CD8-positive, alpha-beta T cell (primary cell): ENCODE measurements at regions of chr19 and their contacts with region 1.

Region 1: DNA sequence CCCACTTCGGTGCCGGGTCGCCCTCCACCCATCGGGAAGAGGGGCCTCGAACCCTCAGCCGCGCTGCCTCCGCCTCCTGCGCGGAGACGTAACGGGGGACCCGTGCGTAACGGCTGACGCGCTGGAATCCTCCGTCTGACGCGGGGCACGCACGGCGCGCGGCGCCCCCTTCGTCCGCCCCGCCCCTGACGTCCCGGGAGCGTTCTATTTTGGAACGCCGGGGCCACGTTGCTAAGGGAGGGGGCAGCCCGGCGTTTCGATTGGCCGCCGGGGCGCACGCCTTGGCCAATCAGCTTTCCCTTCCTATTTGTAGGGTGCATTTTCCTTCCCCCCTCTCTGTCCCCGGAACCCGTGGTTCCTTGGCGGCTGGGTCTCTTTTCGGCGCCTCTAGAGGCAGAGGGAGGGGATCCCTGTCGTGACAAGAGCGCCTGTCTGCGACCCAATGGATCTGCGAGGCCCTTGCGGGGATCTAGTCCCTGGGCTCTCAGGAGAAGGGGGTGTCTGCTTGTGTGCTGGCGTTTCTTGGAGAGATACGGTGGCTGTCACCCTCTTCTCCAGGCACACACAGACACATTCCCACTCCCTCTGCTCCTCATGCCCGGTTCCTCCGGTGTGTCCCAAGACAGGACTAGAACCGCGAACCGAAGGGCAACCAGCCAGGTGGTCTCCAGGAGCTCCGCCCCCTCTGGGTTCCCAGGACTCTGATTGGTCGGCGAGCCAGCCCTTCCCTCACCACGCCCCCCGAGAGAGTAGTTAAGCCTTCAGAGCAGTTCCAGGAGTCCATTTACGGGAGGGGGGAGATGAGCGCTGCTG is 1.5 kb downstream of the FOSB start:
- DNase-seq: peak; percentile 81 to 97 (median 93)
- ATAC-seq: peak; percentile 63
- H3K4me3 ChIP-seq: peak overlapping the region; percentile 85 to 98
- H3K4me3 Mint-ChIP-seq: peak overlapping the region; percentile 93
- H3K27ac ChIP-seq: peak overlapping the region; percentile 99 to 100
- H3K27ac Mint-ChIP-seq: peak overlapping the region; percentile 98
- H3K4me1 ChIP-seq: peaks cover 16% of the 10 kb centered on the region
- H3K4me1 Mint-ChIP-seq: peaks cover 17% of the 10 kb centered on the region
- H3K27me3 ChIP-seq: no peaks in the 10 kb centered on the region
- H3K27me3 Mint-ChIP-seq: peaks cover 15% of the 10 kb centered on the region
- CTCF ChIP-seq: no peak

Region 2: DNA sequence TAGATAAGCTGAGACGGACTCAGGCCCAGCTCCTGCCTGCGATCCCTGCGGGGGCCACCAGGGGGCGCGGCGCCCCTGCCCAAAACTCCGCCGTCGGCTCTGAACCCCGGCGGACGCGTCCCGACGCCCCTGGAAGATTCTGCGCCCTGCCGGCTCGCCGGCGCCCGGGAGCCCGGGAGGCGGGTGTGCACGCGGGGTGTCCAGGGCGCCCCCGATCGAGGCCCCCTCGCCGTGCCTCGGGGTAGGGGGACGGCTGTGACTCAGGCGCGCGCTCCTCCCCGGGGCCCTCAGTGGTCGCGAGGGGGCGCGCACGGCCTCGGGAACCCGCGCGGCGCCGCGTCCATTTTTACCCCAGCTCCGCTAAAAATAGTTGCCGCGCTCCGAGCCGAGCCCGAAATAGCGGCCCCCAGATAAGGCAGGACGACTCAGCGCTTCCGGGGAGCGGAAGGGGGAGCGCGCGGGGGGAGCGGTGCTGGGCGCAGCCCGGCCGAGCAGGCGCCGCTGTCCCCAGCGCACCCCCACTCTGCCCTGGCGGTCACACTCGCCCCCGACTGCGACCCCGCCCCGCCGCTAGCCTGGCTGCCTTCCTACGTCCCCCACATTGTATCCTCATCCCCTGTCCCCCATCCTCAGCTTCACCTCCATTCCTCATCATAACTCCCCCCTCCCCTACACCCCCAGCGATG is 29.6 kb before region 1 on chr19:
- CTCF ChIA-PET with region 1: interaction called, 53 read pairs
- POLR2A ChIA-PET with region 1: interaction called, 39 read pairs
- intact Hi-C with region 1: loop called (anchors 1 kb)
- DNase-seq: peak; percentile 76 to 94 (median 86)
- ATAC-seq: peak; percentile 70
- H3K4me3 ChIP-seq: peak overlapping the region; percentile 23 to 71
- H3K4me3 Mint-ChIP-seq: peak overlapping the region; percentile 74
- H3K27ac ChIP-seq: peak overlapping the region; percentile 65 to 81
- H3K27ac Mint-ChIP-seq: no peak overlapping the region
- H3K4me1 ChIP-seq: peaks cover 37% of the 10 kb centered on the region
- H3K4me1 Mint-ChIP-seq: peaks cover 30% of the 10 kb centered on the region
- H3K27me3 ChIP-seq: no peaks in the 10 kb centered on the region
- H3K27me3 Mint-ChIP-seq: no peaks in the 10 kb centered on the region
- CTCF ChIP-seq: peak; percentile 100

Region 3: DNA sequence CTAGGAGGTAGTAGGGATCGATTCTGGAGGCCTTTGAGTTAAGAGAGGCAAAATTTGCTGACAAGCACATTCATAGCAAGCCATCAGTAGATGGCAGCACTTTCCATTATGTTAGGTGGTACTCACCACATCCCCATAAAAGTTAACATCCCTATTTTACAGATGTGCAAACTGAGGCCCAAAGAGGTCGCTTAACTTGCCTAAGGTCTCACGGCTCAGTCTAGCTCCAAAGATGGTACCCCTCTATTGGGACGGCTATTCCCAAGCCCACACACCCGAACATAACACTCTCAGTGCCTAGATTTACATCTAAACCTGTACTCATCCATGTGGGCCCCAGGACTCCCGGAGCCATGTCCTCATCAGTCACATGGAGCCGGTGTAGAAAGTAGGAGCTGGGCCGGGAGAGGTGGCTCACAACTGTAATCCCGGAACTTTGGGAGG is 23.0 kb before region 1 on chr19:
- CTCF ChIA-PET with region 1: interaction called, 53 read pairs
- POLR2A ChIA-PET with region 1: interaction called, 17 read pairs
- intact Hi-C with region 1: loop called (anchors 1 kb)
- DNase-seq: peak in 3 of 9 experiments; percentile 22 to 76 (median 65)
- ATAC-seq: no peak
- H3K4me3 ChIP-seq: no peak overlapping the region
- H3K4me3 Mint-ChIP-seq: peak overlapping the region; percentile 35
- H3K27ac ChIP-seq: peak overlapping the region in 1 of 2 experiments; percentile 41
- H3K27ac Mint-ChIP-seq: no peak overlapping the region
- H3K4me1 ChIP-seq: peaks cover 45% of the 10 kb centered on the region
- H3K4me1 Mint-ChIP-seq: peaks cover 56% of the 10 kb centered on the region
- H3K27me3 ChIP-seq: no peaks in the 10 kb centered on the region
- H3K27me3 Mint-ChIP-seq: no peaks in the 10 kb centered on the region
- CTCF ChIP-seq: peak; percentile 20

Region 4: DNA sequence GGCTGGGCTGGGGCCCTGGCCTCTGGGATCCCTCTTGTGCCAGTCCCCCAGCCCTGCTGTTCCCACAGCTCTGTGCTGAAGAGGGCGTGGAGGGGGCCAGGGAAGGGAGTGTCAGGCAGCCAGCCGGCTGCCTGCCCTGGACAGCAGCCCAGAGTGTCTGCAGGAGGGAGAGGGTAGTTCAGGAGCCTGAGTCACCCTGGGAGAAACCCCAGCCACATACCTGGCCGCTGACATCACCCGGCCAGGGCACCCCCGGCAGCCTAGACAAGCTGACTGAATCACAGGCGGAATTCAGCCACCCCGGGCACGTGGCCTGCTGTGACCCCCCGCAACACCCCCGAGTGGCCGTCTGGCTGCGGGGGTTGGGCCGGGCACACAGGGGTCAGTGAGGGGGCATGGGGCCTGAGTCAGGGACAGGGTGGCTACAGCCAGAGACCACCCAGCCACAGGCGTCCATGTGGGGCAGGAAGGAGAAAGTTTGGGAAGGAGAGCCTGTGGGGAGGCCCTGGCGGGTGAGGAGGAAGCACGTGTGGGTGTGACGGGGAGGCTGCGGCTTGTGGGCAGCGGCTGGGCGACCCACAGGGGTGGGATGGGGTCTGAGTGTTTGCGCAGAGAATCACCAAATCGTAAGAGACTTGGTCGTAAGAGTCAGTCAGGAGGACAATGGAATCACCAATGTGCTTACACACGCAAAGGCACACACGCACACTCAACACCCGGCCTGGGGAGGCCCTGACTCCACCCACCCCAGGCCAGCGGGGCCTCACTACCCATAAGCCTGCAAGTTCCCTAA is 13.4 kb before region 1 on chr19:
- CTCF ChIA-PET with region 1: interaction called, 6 read pairs
- POLR2A ChIA-PET with region 1: interaction called, 8 read pairs
- intact Hi-C with region 1: loop called in 1 of 2 experiments (anchors 1 kb)
- DNase-seq: peak; percentile 17 to 90 (median 69)
- ATAC-seq: peak; percentile 50
- H3K4me3 ChIP-seq: peak overlapping the region in 1 of 2 experiments; percentile 2
- H3K4me3 Mint-ChIP-seq: peak overlapping the region; percentile 35
- H3K27ac ChIP-seq: peak overlapping the region in 1 of 2 experiments; percentile 3
- H3K27ac Mint-ChIP-seq: peak overlapping the region; percentile 82
- H3K4me1 ChIP-seq: peaks cover 26% of the 10 kb centered on the region
- H3K4me1 Mint-ChIP-seq: peaks cover 29% of the 10 kb centered on the region
- H3K27me3 ChIP-seq: no peaks in the 10 kb centered on the region
- H3K27me3 Mint-ChIP-seq: peaks cover 2% of the 10 kb centered on the region
- CTCF ChIP-seq: no peak